ENCODE measurements at regions of chr10 and their contacts with region 1.

Region 1: DNA sequence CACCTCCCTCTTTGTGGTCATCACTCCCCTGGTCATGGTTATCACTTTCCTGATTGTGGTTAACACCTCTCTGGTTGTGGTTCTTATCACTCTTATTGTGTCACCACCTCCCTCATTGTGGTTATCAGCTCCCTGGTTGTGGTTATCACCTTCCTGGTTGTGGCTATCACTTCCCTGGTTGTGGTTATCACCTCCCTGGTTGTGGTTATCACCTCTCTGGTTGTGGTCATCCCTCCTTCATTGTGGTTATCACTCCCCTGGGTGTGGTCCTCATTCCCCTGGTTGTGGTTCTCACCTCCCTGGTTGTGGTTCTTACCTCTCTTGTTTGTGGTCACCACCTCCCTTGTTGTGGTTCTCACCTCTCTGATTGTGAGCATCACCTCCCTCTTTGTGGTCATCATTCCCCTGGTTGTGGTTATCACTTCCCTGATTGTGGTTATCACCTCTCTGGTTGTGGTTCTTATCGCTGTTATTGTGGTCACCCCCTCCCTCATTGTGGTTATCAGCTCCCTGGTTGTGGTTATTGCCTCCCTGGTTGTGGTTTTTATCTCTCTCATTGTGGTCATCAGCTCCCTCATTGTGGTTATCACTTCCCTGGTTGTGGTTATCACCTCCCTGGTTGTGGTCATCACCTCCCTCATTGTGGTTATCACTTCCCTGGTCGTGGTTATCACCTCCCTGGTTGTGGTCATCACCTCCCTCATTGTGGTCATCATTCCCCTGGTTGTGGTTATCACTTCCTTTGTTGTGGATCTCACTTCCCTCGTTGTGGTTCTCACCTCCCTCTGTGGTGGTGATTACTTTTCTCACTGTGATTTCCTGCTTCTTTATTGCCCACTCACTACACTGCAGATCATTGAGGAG is 106.7 kb downstream of the GPR26 start:
- DNase-seq: no peak

Region 2: DNA sequence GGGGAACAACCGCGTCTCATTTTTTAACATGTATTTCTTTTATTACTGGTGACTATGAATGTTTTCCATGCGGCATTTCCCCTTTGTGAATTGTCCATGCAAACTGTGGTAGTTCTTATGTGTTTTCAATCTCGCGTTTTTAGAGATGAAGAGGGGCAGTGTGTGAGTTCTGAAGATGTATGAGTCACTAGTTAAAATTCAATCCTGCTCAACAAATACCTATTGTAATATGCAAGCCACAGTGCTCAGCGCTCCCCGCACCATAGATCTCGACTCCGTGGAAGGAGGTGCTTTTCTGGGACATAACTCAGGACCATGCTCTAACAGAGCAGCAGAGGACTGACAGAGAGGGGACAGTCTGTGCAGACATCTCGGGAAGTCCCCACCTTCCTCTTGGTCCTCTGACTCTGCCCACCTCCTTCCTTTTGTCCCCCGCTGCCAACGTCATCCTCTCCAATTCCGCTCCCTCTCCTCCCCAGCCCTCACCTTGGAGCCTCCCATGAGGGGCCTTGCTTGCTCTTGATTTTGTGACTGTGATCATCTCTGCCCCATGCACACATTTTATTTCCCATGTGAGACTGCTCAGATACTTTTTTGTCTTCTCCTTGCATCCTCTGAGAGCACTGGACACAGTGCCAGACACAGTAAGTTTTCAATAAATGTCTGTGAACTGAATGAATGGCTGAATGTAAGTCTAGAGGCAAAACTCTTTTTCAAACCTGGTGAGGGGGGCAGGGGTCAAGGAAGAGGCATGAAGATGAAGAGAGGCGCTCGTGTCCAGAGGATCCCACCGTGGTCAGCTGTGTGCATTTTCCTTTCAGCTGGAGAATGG is 1441.0 kb before region 1 on chr10:
- intact Hi-C with region 1: loop called in 1 of 2 experiments (anchors 10 kb)
- DNase-seq: no peak